Activated CD4-positive, alpha-beta T cell treated with anti-CD3 and anti-CD28 coated beads, Interleukin-2, amount 10 ng/mL, durations not matched to agents 24 days and 14 days (primary cell): ENCODE measurements at regions of chr6 and their contacts with region 1.

Region 1: GRCh38 chr6:109382576-109383437 is 540 bp upstream of the CD164 start:
- DNase-seq: peak; percentile 97
- H3K4me3 Mint-ChIP-seq: peak overlapping the region; percentile 96
- H3K27ac Mint-ChIP-seq: peak overlapping the region; percentile 99
- H3K4me1 Mint-ChIP-seq: peaks cover 30% of the 10 kb centered on the region
- H3K27me3 Mint-ChIP-seq: peaks cover 4% of the 10 kb centered on the region

Region 2: DNA sequence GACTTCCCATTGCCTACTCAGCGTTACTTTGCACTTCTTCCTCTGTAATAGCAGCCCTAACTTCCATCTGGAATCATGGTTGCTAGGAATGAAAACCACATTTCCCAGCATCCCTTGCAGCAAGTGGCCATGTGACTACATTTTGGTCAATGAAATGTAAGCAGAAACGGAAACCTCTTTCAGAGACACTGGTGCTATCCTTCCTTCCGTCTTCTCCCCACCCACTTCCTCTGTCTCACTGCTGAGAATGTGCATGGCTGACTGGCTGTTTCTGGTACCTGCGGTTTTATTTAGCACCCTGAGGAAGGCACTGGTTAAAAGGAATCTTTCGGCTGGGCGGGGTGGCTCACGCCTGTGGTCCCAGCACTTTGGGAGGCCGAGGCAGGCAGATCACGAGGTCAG is 1666.1 kb before region 1 on chr6:
- intact Hi-C with region 1: loop called (anchors 2 kb)
- DNase-seq: peak; percentile 93
- H3K4me3 Mint-ChIP-seq: peak overlapping the region; percentile 71
- H3K27ac Mint-ChIP-seq: peak overlapping the region; percentile 85
- H3K4me1 Mint-ChIP-seq: peaks cover 52% of the 10 kb centered on the region
- H3K27me3 Mint-ChIP-seq: no peaks in the 10 kb centered on the region

Region 3: GRCh38 chr6:108558372-108559096 is 824.3 kb before region 1 on chr6:
- intact Hi-C with region 1: loop called (anchors 1 kb)
- DNase-seq: peak; percentile 99
- H3K4me3 Mint-ChIP-seq: peak overlapping the region; percentile 88
- H3K27ac Mint-ChIP-seq: peak overlapping the region; percentile 93
- H3K4me1 Mint-ChIP-seq: peaks cover 19% of the 10 kb centered on the region
- H3K27me3 Mint-ChIP-seq: peaks cover 44% of the 10 kb centered on the region

Region 4: GRCh38 chr6:109095027-109095834 is 287.6 kb before region 1 on chr6 and contains the start of gene CEP57L1:
- intact Hi-C with region 1: loop called (anchors 1 kb)
- DNase-seq: peak; percentile 98
- H3K4me3 Mint-ChIP-seq: peak within 1 kb of the TSS; percentile 90
- H3K27ac Mint-ChIP-seq: peak within 1 kb of the TSS; percentile 100
- H3K4me1 Mint-ChIP-seq: peaks cover 53% of the 10 kb centered on the region
- H3K27me3 Mint-ChIP-seq: no peaks in the 10 kb centered on the region
- total RNA-seq, gene CEP57L1: 14.2 and 15.3 TPM in 2 replicates

Region 5: GRCh38 chr6:109308018-109308492 is 74.8 kb before region 1 on chr6:
- intact Hi-C with region 1: loop called (anchors 2 kb)
- DNase-seq: no peak
- H3K4me3 Mint-ChIP-seq: no peak overlapping the region
- H3K27ac Mint-ChIP-seq: no peak overlapping the region
- H3K4me1 Mint-ChIP-seq: peaks cover 17% of the 10 kb centered on the region
- H3K27me3 Mint-ChIP-seq: no peaks in the 10 kb centered on the region

Region 6: GRCh38 chr6:109336221-109336961 is 46.4 kb before region 1 on chr6:
- intact Hi-C with region 1: no loop called
- DNase-seq: no peak
- H3K4me3 Mint-ChIP-seq: no peak overlapping the region
- H3K27ac Mint-ChIP-seq: no peak overlapping the region
- H3K4me1 Mint-ChIP-seq: peaks cover 4% of the 10 kb centered on the region
- H3K27me3 Mint-ChIP-seq: no peaks in the 10 kb centered on the region

Region 7: DNA sequence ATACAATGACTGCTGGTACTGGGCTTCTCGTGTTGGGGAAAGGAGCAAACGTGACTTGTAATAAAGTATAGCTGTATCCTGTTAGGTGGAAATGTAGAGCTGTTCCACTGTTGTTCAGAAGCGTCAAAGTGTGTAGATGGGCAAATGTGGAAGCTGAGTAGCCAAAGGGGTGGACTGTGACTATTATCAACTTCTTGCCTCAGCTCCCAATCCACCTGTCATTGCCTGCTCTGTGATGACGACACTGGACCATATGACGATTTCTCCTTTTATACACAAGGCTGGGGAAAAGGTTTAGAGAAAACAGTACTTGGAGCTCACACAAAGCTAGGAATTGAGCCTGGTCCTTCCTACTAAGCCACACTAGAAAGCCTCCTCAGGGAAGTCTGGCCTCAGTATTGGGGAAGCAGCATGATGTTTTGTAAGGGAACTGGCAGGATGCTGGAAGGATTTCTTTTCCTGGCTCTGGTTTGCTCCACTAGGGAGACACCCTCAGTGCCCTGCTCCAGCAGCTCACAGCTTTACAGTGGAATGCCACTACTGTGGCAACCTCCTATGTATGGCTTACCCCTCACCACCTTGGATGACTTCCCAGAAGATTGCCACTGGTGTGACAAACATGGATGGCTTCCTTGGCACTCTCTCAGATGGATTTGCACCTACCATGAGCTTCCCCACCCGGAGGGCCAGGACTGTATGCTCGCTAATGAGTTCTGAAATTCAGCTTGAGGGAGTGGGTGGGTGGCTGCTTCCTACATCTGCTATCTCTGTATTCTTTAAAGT is 20.5 kb before region 1 on chr6:
- intact Hi-C with region 1: no loop called
- DNase-seq: no peak
- H3K4me3 Mint-ChIP-seq: no peak overlapping the region
- H3K27ac Mint-ChIP-seq: no peak overlapping the region
- H3K4me1 Mint-ChIP-seq: peaks cover 18% of the 10 kb centered on the region
- H3K27me3 Mint-ChIP-seq: no peaks in the 10 kb centered on the region

Region 8: GRCh38 chr6:109482905-109483735 is 100.3 kb after region 1 on chr6 and contains the start of gene ZBTB24:
- intact Hi-C with region 1: loop called (anchors 1 kb)
- DNase-seq: peak; percentile 97
- H3K4me3 Mint-ChIP-seq: peak within 1 kb of the TSS; percentile 97
- H3K27ac Mint-ChIP-seq: peak within 1 kb of the TSS; percentile 93
- H3K4me1 Mint-ChIP-seq: peaks cover 41% of the 10 kb centered on the region
- H3K27me3 Mint-ChIP-seq: peaks cover 3% of the 10 kb centered on the region
- total RNA-seq, gene ZBTB24: 18.9 and 19.6 TPM in 2 replicates

Region 9: GRCh38 chr6:109523478-109523877 is 140.7 kb after region 1 on chr6:
- intact Hi-C with region 1: no loop called
- DNase-seq: no peak
- H3K4me3 Mint-ChIP-seq: no peak overlapping the region
- H3K27ac Mint-ChIP-seq: no peak overlapping the region
- H3K4me1 Mint-ChIP-seq: peaks cover 4% of the 10 kb centered on the region
- H3K27me3 Mint-ChIP-seq: peaks cover 10% of the 10 kb centered on the region

Region 10: GRCh38 chr6:109964949-109965348 is 582.1 kb after region 1 on chr6:
- intact Hi-C with region 1: no loop called
- DNase-seq: no peak
- H3K4me3 Mint-ChIP-seq: no peak overlapping the region
- H3K27ac Mint-ChIP-seq: no peak overlapping the region
- H3K4me1 Mint-ChIP-seq: no peaks in the 10 kb centered on the region
- H3K27me3 Mint-ChIP-seq: peaks cover 4% of the 10 kb centered on the region

Region 11: DNA sequence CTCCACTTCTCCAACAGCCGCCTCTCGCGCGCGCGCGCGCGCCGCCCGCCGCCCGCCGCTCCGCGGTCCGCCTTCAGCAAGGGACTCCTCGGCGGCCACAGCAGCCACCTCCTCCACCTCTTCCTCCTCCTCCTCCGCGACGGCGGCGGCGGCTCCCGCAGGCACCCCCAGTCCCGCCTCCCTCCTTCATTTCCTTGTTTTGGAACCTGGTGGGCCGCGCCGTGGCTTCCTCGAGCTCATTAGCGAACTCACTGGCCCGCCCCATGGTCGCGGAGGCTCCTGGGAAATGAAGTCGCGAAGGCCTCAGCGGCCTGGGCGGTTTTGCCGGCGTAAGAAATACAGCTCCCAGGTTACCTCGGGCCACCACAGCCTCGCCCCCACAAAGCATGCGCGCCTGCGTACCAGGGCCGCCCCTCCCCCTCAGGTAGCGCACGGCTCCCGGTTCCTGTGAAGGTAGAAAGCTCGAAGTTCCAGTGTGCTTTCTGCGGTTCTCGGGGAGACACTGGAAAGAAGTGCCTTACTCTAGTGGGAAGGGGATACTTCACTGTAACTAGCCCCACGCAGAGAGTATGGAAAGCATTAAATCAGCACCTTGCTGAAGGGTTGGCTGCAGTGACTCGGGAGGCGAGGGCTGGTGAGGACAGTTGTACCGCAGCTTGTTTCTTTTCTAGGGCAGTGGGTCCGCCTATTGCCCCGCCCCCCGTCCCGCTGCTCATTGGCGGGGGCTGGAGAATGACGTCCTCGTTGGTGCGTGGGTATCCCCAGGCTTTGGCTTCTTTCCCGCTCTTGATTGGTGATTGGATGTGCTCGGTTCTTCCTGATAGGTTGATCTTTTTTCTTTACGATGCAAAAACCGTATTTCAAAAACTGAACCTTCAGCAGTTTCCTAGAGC is 1432.7 kb after region 1 on chr6 and contains the start of gene CDK19:
- intact Hi-C with region 1: loop called (anchors 5 kb)
- DNase-seq: peak; percentile 99
- H3K4me3 Mint-ChIP-seq: peak within 1 kb of the TSS; percentile 98
- H3K27ac Mint-ChIP-seq: peak within 1 kb of the TSS; percentile 98
- H3K4me1 Mint-ChIP-seq: peaks cover 45% of the 10 kb centered on the region
- H3K27me3 Mint-ChIP-seq: no peaks in the 10 kb centered on the region
- total RNA-seq, gene CDK19: 13.0 and 15.7 TPM in 2 replicates